GM12878 (cell line): ENCODE measurements at regions of chr4 and their contacts with region 1.

Region 1: GRCh38 chr4:169270810-169271691 is at the start of gene SH3RF1:
- DNase-seq: no peak
- ATAC-seq: peak; percentile 79
- H3K4me3 ChIP-seq: peak within 1 kb of the TSS; percentile 80
- H3K27ac ChIP-seq: peak within 1 kb of the TSS; percentile 75
- H3K4me1 ChIP-seq: peaks cover 14% of the 10 kb centered on the region
- H3K27me3 ChIP-seq: no peaks in the 10 kb centered on the region
- CTCF ChIP-seq: peak; percentile 24 to 38 (median 25); a peak in 5 of 6 replicates
- EP300 ChIP-seq: no peak; a peak in 1 of 4 replicates
- POLR2A ChIP-seq: peak; percentile 85
- RAD21 ChIP-seq: peak; percentile 44
- polyA plus RNA-seq, gene SH3RF1: 4.5 to 10.7 TPM

Region 2: DNA sequence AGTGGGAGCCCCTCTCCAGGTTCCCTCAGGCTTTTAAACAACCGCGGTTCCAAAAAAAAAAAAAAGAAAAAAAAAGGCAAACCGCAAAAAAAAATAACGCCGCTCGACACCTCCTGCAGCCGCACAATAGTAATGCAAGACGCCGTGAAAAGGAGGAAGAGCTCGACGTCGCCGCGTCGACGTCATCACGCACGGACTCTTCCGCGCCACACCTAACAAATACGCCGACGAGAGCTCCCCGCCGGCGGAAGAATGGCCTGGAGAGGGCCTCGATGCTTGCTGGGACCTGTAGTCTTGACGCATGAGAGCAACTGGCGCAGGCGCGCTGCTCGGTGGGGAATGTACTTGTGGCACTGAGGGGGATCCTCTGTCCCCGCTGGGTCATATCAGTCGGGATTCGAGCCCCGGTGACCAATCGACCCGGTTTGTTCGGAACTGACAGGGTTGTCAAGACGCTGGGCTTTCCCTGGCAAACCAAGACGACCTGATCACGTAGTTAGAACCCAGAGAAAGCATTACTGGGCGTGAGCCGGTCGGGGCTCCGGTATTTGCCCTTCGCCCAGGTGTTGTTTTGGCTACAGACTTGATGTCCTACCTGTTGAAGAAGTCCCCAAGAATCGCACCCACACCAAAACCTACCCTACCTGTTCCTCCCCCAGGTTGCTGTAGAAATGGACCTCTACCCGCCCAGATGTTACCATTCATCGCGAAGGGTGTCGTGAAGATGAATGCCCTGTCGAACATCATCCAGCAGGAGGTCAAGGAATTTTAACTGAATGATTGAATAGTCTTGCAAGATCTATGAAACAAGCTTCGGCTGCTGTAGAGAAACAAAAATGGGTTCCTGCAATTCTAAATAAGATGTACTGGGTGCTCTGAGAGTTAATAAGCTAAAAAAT is 260.7 kb before region 1 on chr4 and contains the start of gene CBR4:
- CTCF ChIA-PET with region 1: interaction called, 11 read pairs
- POLR2A ChIA-PET with region 1: interaction called, 4 read pairs
- RAD21 ChIA-PET with region 1: interaction called, 10 read pairs
- SMC1A ChIA-PET with region 1: interaction called, 6 read pairs
- in situ Hi-C with region 1: no loop called
- intact Hi-C with region 1: no loop called
- DNase-seq: peak; percentile 94
- ATAC-seq: peak; percentile 96
- H3K4me3 ChIP-seq: peak within 1 kb of the TSS; percentile 86
- H3K27ac ChIP-seq: peak within 1 kb of the TSS; percentile 91
- H3K4me1 ChIP-seq: no peaks in the 10 kb centered on the region
- H3K27me3 ChIP-seq: no peaks in the 10 kb centered on the region
- CTCF ChIP-seq: peak; percentile 6 to 36 (median 35); a peak in 2 of 6 replicates
- EP300 ChIP-seq: no peak; a peak in 1 of 4 replicates
- POLR2A ChIP-seq: peak; percentile 86
- RAD21 ChIP-seq: 0 out of 2 replicates have a peak, but pooled peaks have one; percentile 11
- polyA plus RNA-seq, gene CBR4: 21.4 to 36.2 TPM

Region 3: GRCh38 chr4:169201222-169202144 is 69.6 kb before region 1 on chr4:
- CTCF ChIA-PET with region 1: interaction called, 4 read pairs
- POLR2A ChIA-PET with region 1: interaction called, 4 read pairs
- RAD21 ChIA-PET with region 1: interaction called, 19 read pairs
- SMC1A ChIA-PET with region 1: interaction called, 21 read pairs
- in situ Hi-C with region 1: no loop called
- intact Hi-C with region 1: no loop called
- DNase-seq: no peak
- ATAC-seq: peak; percentile 41
- H3K4me3 ChIP-seq: no peak overlapping the region
- H3K27ac ChIP-seq: no peak overlapping the region; the same call in 1 of the 2 replicates
- H3K4me1 ChIP-seq: no peaks in the 10 kb centered on the region
- H3K27me3 ChIP-seq: no peaks in the 10 kb centered on the region
- CTCF ChIP-seq: no peak
- EP300 ChIP-seq: no peak
- POLR2A ChIP-seq: no peak
- RAD21 ChIP-seq: no peak

Region 4: GRCh38 chr4:169260217-169260866 is 10.7 kb before region 1 on chr4:
- CTCF ChIA-PET with region 1: interaction called, 37 read pairs
- POLR2A ChIA-PET with region 1: interaction called, 17 read pairs
- RAD21 ChIA-PET with region 1: interaction called, 64 read pairs
- SMC1A ChIA-PET with region 1: interaction called, 102 read pairs
- in situ Hi-C with region 1: no loop called
- intact Hi-C with region 1: no loop called
- DNase-seq: no peak
- ATAC-seq: peak; percentile 40
- H3K4me3 ChIP-seq: no peak overlapping the region; the same call in 1 of the 2 replicates
- H3K27ac ChIP-seq: no peak overlapping the region
- H3K4me1 ChIP-seq: no peaks in the 10 kb centered on the region
- H3K27me3 ChIP-seq: no peaks in the 10 kb centered on the region
- CTCF ChIP-seq: no peak
- EP300 ChIP-seq: no peak
- POLR2A ChIP-seq: no peak
- RAD21 ChIP-seq: no peak

Region 5: DNA sequence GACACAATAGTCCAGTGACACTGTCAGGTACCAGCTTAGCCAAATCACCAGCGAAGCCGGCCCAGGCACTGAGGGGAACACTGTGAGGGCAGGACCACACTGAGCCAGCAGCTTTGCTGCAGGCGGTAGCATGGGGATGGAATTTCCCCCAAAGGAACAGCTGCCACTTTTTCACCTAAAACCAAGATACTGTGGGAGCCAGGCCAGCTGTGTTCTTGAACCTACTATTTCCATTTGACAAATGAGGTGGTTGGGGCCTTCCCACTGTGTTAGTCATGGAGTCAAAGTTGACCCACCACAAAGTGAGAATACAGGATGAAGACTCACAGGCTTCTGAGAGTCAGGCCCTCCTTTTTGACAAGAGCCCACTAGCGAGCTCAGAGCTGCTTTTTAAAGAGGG is 70.4 kb after region 1 on chr4:
- CTCF ChIA-PET with region 1: interaction called, 5 read pairs
- POLR2A ChIA-PET with region 1: no interaction called
- RAD21 ChIA-PET with region 1: interaction called, 10 read pairs
- SMC1A ChIA-PET with region 1: interaction called, 9 read pairs
- in situ Hi-C with region 1: no loop called
- intact Hi-C with region 1: loop called (anchors 1 kb)
- DNase-seq: peak; percentile 62
- ATAC-seq: peak; percentile 87
- H3K4me3 ChIP-seq: no peak overlapping the region
- H3K27ac ChIP-seq: peak overlapping the region; percentile 23; the same call in 1 of the 2 replicates
- H3K4me1 ChIP-seq: peaks cover 13% of the 10 kb centered on the region
- H3K27me3 ChIP-seq: no peaks in the 10 kb centered on the region
- CTCF ChIP-seq: no peak
- EP300 ChIP-seq: peak in 1 of 2 experiments; percentile 36; a peak in 1 of 4 replicates
- POLR2A ChIP-seq: no peak
- RAD21 ChIP-seq: peak; percentile 35; the same call in 1 of the 2 replicates

Region 6: GRCh38 chr4:169437299-169438047 is 166.4 kb after region 1 on chr4:
- CTCF ChIA-PET with region 1: interaction called, 13 read pairs
- POLR2A ChIA-PET with region 1: interaction called, 21 read pairs
- RAD21 ChIA-PET with region 1: interaction called, 51 read pairs
- SMC1A ChIA-PET with region 1: interaction called, 36 read pairs
- in situ Hi-C with region 1: no loop called
- intact Hi-C with region 1: loop called (anchors 2 kb)
- DNase-seq: peak; percentile 89
- ATAC-seq: peak; percentile 93
- H3K4me3 ChIP-seq: no peak overlapping the region; the same call in 1 of the 2 replicates
- H3K27ac ChIP-seq: peak overlapping the region; percentile 98
- H3K4me1 ChIP-seq: peaks cover 42% of the 10 kb centered on the region
- H3K27me3 ChIP-seq: no peaks in the 10 kb centered on the region
- CTCF ChIP-seq: no peak
- EP300 ChIP-seq: no peak
- POLR2A ChIP-seq: peak; percentile 61
- RAD21 ChIP-seq: no peak